ENCODE measurements at regions of chr20 and their contacts with region 1.

Region 1: GRCh38 chr20:6636209-6637159 is 131.0 kb upstream of the BMP2 start:
- DNase-seq: no peak
- ATAC-seq: peak; percentile 94 to 96 (median 95)
- H3K4me3 ChIP-seq: no peak overlapping the region
- H3K27ac ChIP-seq: no peak overlapping the region
- H3K4me1 ChIP-seq: no peaks in the 10 kb centered on the region
- H3K27me3 ChIP-seq: no peaks in the 10 kb centered on the region
- CTCF ChIP-seq: peak; percentile 68 to 75 (median 70)
- POLR2A ChIP-seq: no peak

Region 2: DNA sequence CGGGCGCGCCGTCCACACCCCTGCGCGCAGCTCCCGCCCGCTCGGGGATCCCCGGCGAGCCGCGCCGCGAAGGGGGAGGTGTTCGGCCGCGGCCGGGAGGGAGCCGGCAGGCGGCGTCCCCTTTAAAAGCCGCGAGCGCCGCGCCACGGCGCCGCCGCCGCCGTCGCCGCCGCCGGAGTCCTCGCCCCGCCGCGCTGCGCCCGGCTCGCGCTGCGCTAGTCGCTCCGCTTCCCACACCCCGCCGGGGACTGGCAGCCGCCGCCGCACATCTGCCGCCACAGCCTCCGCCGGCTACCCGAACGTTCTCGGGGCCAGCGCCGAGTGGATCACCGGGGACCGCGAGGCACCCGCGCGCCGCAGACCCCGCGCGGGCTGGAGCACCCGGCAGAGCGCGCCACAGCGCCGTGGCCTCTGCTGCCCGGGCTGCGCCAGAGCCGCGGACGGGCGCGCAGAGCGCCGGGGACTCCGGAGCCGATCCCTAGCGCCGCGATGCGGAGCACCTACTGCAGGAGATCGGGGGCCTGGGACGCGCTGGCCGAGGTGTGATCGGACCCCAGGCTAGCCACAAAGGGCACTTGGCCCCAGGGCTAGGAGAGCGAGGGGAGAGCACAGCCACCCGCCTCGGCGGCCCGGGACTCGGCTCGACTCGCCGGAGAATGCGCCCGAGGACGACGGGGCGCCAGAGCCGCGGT is 131.2 kb after region 1 on chr20 and contains the start of gene BMP2:
- intact Hi-C with region 1: loop called in 1 of 2 experiments (anchors 10 kb)
- DNase-seq: peak; percentile 73 to 77 (median 75)
- ATAC-seq: peak; percentile 74 to 80 (median 76)
- H3K4me3 ChIP-seq: peak within 1 kb of the TSS; percentile 65 to 80 (median 79)
- H3K27ac ChIP-seq: peak within 1 kb of the TSS; percentile 71 to 88 (median 76)
- H3K4me1 ChIP-seq: peaks cover 0 to 18% (median 3%) of the 10 kb centered on the region in 4 donors
- H3K27me3 ChIP-seq: no peaks in the 10 kb centered on the region
- CTCF ChIP-seq: peak in 2 of 4 donors; percentile 11 to 19
- POLR2A ChIP-seq: peak; percentile 69
- total RNA-seq, gene BMP2: 1.4 to 9.3 (median 4.9) TPM

Region 3: GRCh38 chr20:6828794-6829423 is 192.4 kb after region 1 on chr20:
- intact Hi-C with region 1: loop called in 1 of 2 experiments (anchors 10 kb)
- DNase-seq: peak in 2 of 3 donors; percentile 46 to 71
- ATAC-seq: peak; percentile 99 to 100 (median 100)
- H3K4me3 ChIP-seq: no peak overlapping the region
- H3K27ac ChIP-seq: no peak overlapping the region
- H3K4me1 ChIP-seq: peaks cover 0 to 3% (median 0%) of the 10 kb centered on the region in 4 donors
- H3K27me3 ChIP-seq: no peaks in the 10 kb centered on the region
- CTCF ChIP-seq: peak; percentile 65 to 73 (median 70)
- POLR2A ChIP-seq: no peak